HEK293T (cell line): ENCODE measurements at regions of chr17 and their contacts with region 1.

Region 1: DNA sequence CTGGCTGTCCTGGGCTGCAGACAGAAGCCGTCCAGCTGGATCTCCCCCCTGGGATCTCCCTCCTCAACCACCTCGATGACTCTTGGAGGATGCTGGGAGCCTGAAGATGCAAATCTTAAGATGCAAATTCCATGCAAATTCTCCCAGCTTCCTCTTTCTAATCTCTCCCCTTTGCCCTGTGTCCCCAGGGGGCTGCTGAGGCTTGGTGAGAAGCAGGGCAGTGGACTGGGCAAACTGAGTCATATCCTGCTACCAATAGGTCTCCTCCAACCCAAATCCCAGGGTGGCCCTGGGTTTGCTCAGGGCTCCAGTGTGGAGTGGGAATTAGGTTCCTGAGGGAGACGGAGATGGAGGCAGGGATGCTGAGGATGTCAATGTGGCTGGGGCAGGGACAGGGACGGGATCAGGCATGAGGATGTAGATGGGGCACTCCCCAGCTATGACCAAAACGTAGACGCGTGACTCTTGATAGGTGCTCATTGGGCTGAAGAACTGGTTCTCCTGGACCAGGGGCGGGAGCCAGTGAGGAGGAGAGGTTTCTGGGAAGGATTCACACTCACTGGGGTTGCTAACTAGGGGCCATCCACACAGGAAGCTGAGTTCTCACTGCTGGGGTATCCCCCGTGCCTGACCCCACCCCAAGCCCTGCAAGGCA is 3.6 kb upstream of the ALOX12B start:
- DNase-seq: no peak

Region 2: DNA sequence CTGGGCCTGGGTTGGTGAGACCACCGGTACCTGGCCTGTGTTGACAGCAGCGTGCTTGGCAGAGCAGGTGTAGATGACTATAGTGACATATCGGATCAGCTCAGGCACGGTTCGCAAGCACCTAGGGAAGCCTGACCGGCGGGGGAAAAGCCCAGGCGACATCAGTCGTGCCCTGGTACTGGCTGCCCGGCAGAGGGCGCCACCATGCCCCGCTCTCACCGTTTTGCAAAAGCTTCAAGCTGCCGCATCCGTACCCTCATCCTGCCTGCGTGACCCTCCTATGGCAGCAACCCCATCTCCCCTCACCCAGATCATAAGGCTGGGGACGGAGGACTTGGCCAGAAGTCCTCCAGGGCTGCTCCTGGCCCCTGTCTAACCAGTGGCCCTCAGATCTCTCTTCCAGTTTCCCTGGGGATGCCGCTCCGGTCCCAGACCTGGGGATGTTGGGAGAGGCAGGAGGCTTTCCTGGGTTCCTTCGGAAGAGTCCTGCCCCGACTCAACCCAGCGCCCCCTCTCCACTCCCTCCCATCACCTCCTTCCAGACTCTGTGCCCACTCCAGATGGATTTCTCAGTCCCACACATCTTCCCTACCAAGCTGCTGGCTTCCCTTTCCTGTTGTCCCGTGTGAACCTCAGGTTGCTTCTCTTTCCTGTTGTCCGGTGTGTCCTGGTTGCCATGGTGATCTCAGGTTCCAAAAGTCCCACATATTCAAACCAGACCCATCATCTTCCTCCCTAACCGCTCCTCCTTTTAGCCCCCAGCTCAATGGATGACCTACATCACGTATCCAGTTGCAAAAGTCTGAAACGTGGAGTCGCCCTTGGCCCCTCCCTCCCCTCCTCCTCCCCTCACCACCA is 17.3 kb before region 1 on chr17:
- CTCF ChIA-PET with region 1: interaction called, 10 read pairs
- POLR2A ChIA-PET with region 1: interaction called, 4 read pairs
- DNase-seq: peak; percentile 85

Region 3: DNA sequence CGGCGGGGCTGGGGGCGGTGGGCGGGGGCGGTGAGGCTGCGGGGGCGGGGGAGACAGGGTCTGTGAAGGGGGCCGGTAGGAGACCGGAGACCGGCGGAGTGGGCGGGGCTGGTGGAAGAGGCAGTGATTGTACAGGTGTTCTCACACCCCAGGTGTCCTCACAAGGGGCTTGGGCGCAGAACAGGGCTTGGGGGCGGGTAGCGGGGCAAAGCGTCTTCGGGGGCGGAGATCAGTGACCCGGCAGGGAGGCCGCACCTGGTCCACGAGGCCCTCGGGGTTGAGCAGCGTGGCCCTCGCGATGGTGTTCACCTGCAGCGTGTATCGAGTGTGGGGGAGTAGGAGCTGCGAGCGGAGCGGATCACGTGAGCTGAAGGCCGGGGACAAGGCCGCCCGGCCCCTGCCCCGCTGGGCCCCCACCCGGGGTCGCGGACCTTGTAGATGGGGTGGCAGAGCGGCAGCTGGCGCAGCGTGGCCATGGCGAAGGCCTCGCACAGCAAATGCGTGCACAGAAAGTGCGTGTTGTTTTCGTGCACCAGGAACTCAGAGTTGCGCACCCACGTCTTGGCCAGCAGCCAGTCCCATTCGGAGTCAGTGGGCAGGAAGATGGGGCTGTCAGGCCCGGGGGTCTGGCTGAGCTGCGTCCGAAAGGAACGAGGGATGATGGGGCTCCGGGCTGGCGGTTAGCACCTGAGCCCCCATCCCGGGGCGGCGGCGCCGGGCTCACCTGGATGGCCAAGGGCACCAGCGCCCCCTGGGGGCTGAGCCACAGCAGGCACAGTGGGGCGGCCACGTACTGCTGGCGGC is 18.7 kb after region 1 on chr17:
- CTCF ChIA-PET with region 1: interaction called, 18 read pairs
- POLR2A ChIA-PET with region 1: no interaction called
- DNase-seq: peak; percentile 79

Region 4: DNA sequence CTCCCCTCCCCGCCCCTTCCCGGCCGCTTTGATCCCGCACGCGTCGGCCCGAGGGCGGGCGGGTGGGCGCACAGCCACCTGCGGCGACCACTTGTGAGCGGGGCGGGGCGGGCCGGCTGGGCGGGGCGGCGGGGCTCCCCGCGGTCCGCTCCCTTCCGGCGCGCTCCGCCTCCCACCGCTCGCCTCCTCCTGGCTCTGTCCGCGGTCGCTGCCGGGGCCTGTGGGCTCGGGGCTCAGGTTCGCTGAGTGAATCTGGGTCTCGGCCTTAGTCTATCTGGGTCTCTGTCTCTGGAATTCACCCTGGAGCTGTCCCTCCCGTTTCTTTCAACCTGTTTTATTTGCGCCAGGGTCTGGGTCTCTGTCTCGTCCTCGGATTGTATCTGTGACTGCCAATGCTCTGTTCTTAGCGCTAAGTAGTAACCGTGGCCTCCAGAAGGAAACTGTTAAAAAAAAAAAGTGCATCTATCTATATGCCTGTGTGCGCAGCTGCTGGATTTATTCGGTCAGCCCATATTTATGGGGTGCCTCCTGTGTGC is 35.4 kb after region 1 on chr17:
- CTCF ChIA-PET with region 1: no interaction called
- POLR2A ChIA-PET with region 1: no interaction called
- DNase-seq: no peak